ENCODE measurements at regions of chrX and their contacts with region 1.

Region 1: GRCh38 chrX:12946838-12947544 is 27.9 kb upstream of the TMSB4X start:
- DNase-seq: peak; percentile 47
- ATAC-seq: peak; percentile 19
- H3K4me3 Mint-ChIP-seq: peak overlapping the region; percentile 62
- H3K27ac Mint-ChIP-seq: peak overlapping the region; percentile 92
- H3K4me1 Mint-ChIP-seq: peaks cover 58% of the 10 kb centered on the region
- H3K27me3 Mint-ChIP-seq: no peaks in the 10 kb centered on the region
- CTCF ChIP-seq: no peak

Region 2: DNA sequence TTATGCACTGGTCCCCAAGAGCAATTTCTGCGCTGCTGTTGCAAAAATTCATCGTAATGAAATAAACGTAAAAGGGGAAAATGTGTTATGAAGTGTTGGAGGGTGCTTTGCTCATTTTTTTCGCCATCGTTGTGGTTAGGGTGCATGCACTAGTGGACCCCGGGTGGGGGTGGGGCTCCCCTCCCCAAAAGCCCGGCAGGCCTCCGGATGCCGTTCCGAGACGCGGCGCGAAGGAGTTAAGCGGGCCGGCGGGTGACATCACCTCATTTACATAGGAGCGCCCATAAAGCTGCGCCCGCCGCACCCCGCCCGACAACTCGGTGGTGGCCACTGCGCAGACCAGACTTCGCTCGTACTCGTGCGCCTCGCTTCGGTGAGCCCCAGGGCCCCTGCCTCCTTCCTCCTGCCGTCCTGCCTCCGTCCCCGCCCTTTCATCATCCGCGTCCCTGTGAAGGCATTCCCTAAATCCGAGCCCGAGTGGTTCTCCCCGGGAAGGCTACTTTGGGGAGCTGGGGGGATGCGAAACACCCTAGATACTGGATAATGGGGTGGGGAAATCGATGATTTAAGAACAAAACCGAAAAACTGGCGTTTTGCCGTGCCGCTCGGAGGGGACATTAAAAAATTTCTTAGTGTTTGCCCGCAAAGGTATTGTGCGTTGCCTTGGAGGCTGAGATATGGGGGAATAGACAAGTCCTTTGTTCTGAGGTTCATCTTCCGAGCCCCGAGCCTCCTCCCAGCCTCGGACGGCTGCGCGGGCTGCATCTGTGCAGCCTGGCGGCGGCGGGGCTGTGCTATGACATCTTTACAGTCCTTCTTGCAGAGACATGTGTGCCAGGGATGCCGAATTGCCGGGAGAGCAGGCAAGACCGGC is 28.0 kb after region 1 on chrX and contains the start of gene TMSB4X:
- CTCF ChIA-PET with region 1: interaction called, 54 read pairs
- POLR2A ChIA-PET with region 1: interaction called, 931 read pairs
- intact Hi-C with region 1: loop called (anchors 1 kb)
- DNase-seq: peak; percentile 75
- ATAC-seq: peak; percentile 46
- H3K4me3 Mint-ChIP-seq: peak within 1 kb of the TSS; percentile 94
- H3K27ac Mint-ChIP-seq: peak within 1 kb of the TSS; percentile 97
- H3K4me1 Mint-ChIP-seq: peaks cover 58% of the 10 kb centered on the region
- H3K27me3 Mint-ChIP-seq: no peaks in the 10 kb centered on the region
- CTCF ChIP-seq: no peak
- total RNA-seq, gene TMSB4X: 5,922 and 6,273 TPM in 2 replicates

Region 3: GRCh38 chrX:13000301-13000811 is 53.4 kb after region 1 on chrX:
- CTCF ChIA-PET with region 1: interaction called, 16 read pairs
- POLR2A ChIA-PET with region 1: interaction called, 43 read pairs
- intact Hi-C with region 1: loop called (anchors 1 kb)
- DNase-seq: no peak
- ATAC-seq: peak; percentile 66
- H3K4me3 Mint-ChIP-seq: peak overlapping the region; percentile 64
- H3K27ac Mint-ChIP-seq: peak overlapping the region; percentile 92
- H3K4me1 Mint-ChIP-seq: peaks cover 72% of the 10 kb centered on the region
- H3K27me3 Mint-ChIP-seq: no peaks in the 10 kb centered on the region
- CTCF ChIP-seq: no peak

Region 4: GRCh38 chrX:13051529-13052172 is 104.7 kb after region 1 on chrX:
- CTCF ChIA-PET with region 1: no interaction called
- POLR2A ChIA-PET with region 1: interaction called, 7 read pairs
- intact Hi-C with region 1: loop called (anchors 1 kb)
- DNase-seq: no peak
- ATAC-seq: peak; percentile 71
- H3K4me3 Mint-ChIP-seq: peak overlapping the region; percentile 19
- H3K27ac Mint-ChIP-seq: peak overlapping the region; percentile 82
- H3K4me1 Mint-ChIP-seq: peaks cover 57% of the 10 kb centered on the region
- H3K27me3 Mint-ChIP-seq: no peaks in the 10 kb centered on the region
- CTCF ChIP-seq: no peak

Region 5: DNA sequence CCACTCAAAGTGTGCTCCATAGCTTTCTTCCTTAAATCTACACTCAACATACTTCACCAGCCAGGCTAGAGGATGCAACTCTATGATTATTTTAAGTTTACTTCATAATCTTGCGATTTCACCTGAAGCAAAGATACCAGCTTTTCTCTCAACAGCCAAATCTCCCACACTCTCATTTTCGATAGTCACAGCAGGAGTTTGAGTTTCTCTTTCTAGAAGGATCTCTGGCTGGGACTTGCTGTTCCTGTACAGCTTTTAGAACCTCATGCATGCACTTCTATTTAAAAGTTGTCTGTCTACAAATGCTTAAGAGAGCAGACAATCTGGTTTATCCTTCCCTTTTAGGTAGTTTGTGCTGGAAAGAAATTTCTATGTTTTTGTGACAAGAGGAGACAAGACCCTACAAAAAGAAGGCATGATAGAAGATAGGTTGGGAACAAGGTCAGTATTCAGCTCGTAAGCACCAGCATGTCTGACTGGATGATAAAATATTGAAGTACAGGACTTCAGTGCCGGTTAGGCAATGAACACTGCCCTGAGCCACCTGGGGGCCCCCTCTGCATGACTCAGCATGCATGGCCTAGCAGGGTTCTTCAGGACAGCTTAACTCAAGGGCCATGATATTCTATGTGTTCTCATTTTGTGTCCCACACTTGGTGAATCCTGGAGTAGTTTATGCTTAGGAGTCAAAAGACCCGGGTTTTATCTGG is 307.2 kb after region 1 on chrX:
- CTCF ChIA-PET with region 1: interaction called, 7 read pairs
- POLR2A ChIA-PET with region 1: interaction called, 5 read pairs
- intact Hi-C with region 1: loop called (anchors 2 kb)
- DNase-seq: no peak
- ATAC-seq: no peak
- H3K4me3 Mint-ChIP-seq: peak overlapping the region; percentile 28
- H3K27ac Mint-ChIP-seq: peak overlapping the region; percentile 74
- H3K4me1 Mint-ChIP-seq: peaks cover 72% of the 10 kb centered on the region
- H3K27me3 Mint-ChIP-seq: no peaks in the 10 kb centered on the region
- CTCF ChIP-seq: no peak

Region 6: DNA sequence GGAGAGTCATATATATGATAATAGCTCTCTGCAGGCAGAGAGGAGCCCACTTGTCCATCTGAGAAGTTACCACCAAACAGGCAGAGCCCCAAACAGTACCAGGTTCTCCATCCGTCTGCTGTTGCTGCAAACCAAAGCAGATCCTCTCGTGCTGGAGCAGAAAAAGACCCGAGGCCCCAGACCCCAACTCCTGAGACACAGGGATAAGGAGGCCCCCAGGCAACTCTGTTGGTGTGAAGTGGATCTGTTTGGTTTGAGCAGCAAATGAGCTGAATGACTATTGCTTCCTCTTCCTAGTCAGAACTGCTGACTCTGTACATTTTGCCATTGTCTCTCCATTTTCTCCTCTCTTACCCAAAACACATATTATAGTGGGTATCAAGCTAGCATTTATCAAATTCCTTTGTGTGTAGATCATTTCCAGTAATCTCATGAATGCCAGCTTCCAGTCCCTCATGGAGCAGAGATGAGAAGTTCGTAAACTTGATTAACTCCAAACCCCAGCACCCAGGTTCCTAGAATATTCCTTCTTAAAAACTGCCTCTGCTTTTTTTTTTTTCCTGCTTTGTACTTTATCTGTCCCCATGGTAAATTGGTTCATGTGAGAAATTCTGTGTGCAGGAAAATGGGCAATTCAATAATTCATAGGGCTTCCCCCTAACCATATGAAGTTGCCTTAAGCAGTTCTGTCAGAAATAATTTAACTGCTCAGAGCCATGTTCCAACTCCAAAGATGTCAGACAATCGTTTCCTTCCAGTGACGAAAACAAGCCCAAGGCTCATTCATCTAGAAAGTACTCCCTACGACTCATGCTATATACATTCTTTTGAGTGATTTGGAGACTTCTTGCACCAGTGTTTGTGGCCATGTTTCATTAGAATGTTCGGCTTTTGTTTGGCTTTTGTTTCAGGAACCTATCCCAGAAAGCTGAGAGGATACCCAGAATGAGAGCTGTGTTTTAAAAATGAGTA is 471.4 kb after region 1 on chrX:
- CTCF ChIA-PET with region 1: interaction called, 3 read pairs
- POLR2A ChIA-PET with region 1: no interaction called
- intact Hi-C with region 1: loop called (anchors 5 kb)
- DNase-seq: no peak
- ATAC-seq: no peak
- H3K4me3 Mint-ChIP-seq: peak overlapping the region; percentile 35
- H3K27ac Mint-ChIP-seq: peak overlapping the region; percentile 92
- H3K4me1 Mint-ChIP-seq: peaks cover 70% of the 10 kb centered on the region
- H3K27me3 Mint-ChIP-seq: no peaks in the 10 kb centered on the region
- CTCF ChIP-seq: no peak

Region 7: GRCh38 chrX:13587786-13588477 is 640.9 kb after region 1 on chrX:
- CTCF ChIA-PET with region 1: no interaction called
- POLR2A ChIA-PET with region 1: no interaction called
- intact Hi-C with region 1: no loop called
- DNase-seq: no peak
- ATAC-seq: no peak
- H3K4me3 Mint-ChIP-seq: no peak overlapping the region
- H3K27ac Mint-ChIP-seq: no peak overlapping the region
- H3K4me1 Mint-ChIP-seq: no peaks in the 10 kb centered on the region
- H3K27me3 Mint-ChIP-seq: peaks cover 11% of the 10 kb centered on the region
- CTCF ChIP-seq: no peak

Region 8: GRCh38 chrX:13646154-13646549 is 699.2 kb after region 1 on chrX:
- CTCF ChIA-PET with region 1: interaction called, 8 read pairs
- POLR2A ChIA-PET with region 1: no interaction called
- intact Hi-C with region 1: loop called (anchors 5 kb)
- DNase-seq: no peak
- ATAC-seq: no peak
- H3K4me3 Mint-ChIP-seq: no peak overlapping the region
- H3K27ac Mint-ChIP-seq: no peak overlapping the region
- H3K4me1 Mint-ChIP-seq: peaks cover 3% of the 10 kb centered on the region
- H3K27me3 Mint-ChIP-seq: no peaks in the 10 kb centered on the region
- CTCF ChIP-seq: no peak